ENCODE measurements at regions of chr19 and their contacts with region 1.

Region 1: GRCh38 chr19:54893406-54893805 is 12.5 kb upstream of the NCR1 start:
- DNase-seq: no peak
- ATAC-seq: no peak
- H3K4me3 Mint-ChIP-seq: no peak overlapping the region
- H3K27ac Mint-ChIP-seq: no peak overlapping the region
- H3K4me1 Mint-ChIP-seq: no peaks in the 10 kb centered on the region
- H3K27me3 Mint-ChIP-seq: peaks cover 4% of the 10 kb centered on the region

Region 2: GRCh38 chr19:54959840-54960239 is 66.4 kb after region 1 on chr19:
- CTCF ChIA-PET with region 1: no interaction called
- POLR2A ChIA-PET with region 1: no interaction called
- intact Hi-C with region 1: no loop called
- DNase-seq: no peak
- ATAC-seq: no peak
- H3K4me3 Mint-ChIP-seq: no peak overlapping the region
- H3K27ac Mint-ChIP-seq: no peak overlapping the region
- H3K4me1 Mint-ChIP-seq: peaks cover 4% of the 10 kb centered on the region
- H3K27me3 Mint-ChIP-seq: peaks cover 5% of the 10 kb centered on the region

Region 3: DNA sequence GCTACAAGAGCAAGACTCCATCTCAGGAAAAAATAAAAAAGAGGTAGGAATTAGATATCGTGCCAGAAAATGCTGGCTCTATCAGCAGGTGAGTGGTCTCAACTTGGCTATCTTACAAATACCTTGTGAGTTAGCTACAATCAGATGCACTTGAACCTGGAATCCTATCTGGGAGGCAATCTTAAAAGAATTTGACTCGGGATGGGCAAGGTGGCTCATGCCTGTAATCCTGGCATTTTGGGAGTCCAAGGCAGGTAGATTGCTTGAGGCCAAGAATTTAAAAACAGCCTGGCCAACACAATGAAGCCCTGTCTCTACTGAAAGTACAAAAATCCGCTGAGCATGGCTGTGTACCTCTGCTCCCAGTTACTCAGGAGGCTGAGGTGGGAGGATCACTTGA is 102.2 kb after region 1 on chr19:
- CTCF ChIA-PET with region 1: no interaction called
- POLR2A ChIA-PET with region 1: interaction called, 15 read pairs
- intact Hi-C with region 1: no loop called
- DNase-seq: no peak
- ATAC-seq: no peak
- H3K4me3 Mint-ChIP-seq: no peak overlapping the region
- H3K27ac Mint-ChIP-seq: no peak overlapping the region
- H3K4me1 Mint-ChIP-seq: no peaks in the 10 kb centered on the region
- H3K27me3 Mint-ChIP-seq: peaks cover 3% of the 10 kb centered on the region

Measured in activated CD4-positive, alpha-beta T cell treated with anti-CD3 and anti-CD28 coated beads for 36 hours (primary cell).